Activated CD4-positive, alpha-beta T cell treated with anti-CD3 and anti-CD28 coated beads for 36 hours (primary cell): ENCODE measurements at regions of chr21 and their contacts with region 1.

Region 1: GRCh38 chr21:33199516-33200217 is 30.1 kb upstream of the IFNAR2 start:
- DNase-seq: peak; percentile 88
- ATAC-seq: peak; percentile 87
- H3K4me3 Mint-ChIP-seq: no peak overlapping the region
- H3K27ac Mint-ChIP-seq: no peak overlapping the region
- H3K4me1 Mint-ChIP-seq: peaks cover 29% of the 10 kb centered on the region
- H3K27me3 Mint-ChIP-seq: no peaks in the 10 kb centered on the region

Region 2: DNA sequence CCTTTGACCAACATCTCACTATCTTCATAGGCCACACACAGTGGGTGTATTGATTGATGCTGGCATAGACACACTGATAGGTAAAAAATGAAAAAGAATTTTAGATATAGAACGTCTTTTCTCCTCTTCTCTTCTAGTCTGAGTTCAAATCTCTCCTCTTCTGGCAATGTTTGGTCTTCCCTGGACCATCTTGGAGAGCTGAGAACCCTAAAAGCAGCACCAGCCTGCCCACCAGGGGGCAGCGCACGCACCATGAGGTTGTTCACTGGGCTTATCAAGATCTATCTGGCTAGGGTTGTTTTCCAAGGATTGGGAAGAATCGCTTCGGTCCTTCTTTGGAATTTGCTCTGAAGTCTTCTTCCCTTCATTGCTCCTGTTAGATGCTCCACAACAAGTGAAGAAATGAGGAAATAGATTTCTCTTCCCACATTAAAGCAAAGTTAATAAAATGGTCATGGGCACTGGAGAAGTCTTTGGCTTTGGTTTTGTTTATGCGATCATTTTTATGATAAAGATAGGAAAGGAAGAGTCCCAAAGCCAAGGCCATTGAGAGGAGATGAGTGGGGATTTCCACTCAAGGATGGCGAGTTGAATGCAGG is 277.9 kb before region 1 on chr21:
- CTCF ChIA-PET with region 1: interaction called, 3 read pairs
- POLR2A ChIA-PET with region 1: no interaction called
- intact Hi-C with region 1: loop called in 1 of 2 experiments (anchors 5 kb)
- DNase-seq: peak; percentile 72
- ATAC-seq: peak; percentile 51
- H3K4me3 Mint-ChIP-seq: no peak overlapping the region
- H3K27ac Mint-ChIP-seq: no peak overlapping the region
- H3K4me1 Mint-ChIP-seq: no peaks in the 10 kb centered on the region
- H3K27me3 Mint-ChIP-seq: no peaks in the 10 kb centered on the region

Region 3: GRCh38 chr21:33127154-33127893 is 72.3 kb before region 1 on chr21:
- CTCF ChIA-PET with region 1: interaction called, 9 read pairs
- POLR2A ChIA-PET with region 1: no interaction called
- intact Hi-C with region 1: loop called (anchors 2 kb)
- DNase-seq: peak; percentile 83
- ATAC-seq: peak; percentile 90
- H3K4me3 Mint-ChIP-seq: peak overlapping the region; percentile 52
- H3K27ac Mint-ChIP-seq: no peak overlapping the region
- H3K4me1 Mint-ChIP-seq: peaks cover 7% of the 10 kb centered on the region
- H3K27me3 Mint-ChIP-seq: peaks cover 8% of the 10 kb centered on the region

Region 4: GRCh38 chr21:33299181-33299752 is 99.6 kb after region 1 on chr21:
- CTCF ChIA-PET with region 1: interaction called, 15 read pairs
- POLR2A ChIA-PET with region 1: no interaction called
- intact Hi-C with region 1: no loop called
- DNase-seq: peak; percentile 69
- ATAC-seq: peak; percentile 90
- H3K4me3 Mint-ChIP-seq: peak overlapping the region; percentile 19
- H3K27ac Mint-ChIP-seq: peak overlapping the region; percentile 85
- H3K4me1 Mint-ChIP-seq: peaks cover 44% of the 10 kb centered on the region
- H3K27me3 Mint-ChIP-seq: no peaks in the 10 kb centered on the region

Region 5: DNA sequence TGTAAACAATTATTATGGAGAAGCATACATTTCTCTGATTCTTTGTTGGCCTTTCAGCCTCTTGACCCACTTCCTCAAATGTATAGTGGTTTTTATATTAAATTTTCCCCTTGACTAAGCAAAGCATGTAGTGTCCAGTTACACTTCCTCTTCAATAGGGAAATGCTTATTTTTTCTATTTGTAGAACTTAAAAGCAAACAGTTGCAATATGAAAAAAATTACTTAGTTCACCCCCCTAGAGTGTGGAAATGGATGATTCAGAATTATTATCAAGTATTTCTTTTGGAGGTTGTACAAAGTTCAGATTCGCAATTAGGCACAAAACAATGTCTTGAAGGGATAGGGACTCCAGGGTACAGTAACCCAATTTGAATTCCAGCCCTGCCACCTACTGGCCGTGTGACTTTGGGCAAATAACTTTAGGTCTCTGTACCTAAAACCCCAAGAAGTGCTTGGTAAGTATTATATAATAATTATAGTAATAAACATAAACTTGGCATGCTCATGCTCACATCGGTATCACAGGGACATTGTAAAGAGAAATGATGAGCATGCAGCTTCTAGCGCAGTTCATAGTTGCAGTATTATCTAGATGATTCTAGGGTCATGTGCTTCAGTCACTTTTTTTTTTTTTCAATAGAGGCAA is 174.9 kb after region 1 on chr21:
- CTCF ChIA-PET with region 1: interaction called, 12 read pairs
- POLR2A ChIA-PET with region 1: no interaction called
- intact Hi-C with region 1: loop called (anchors 1 kb)
- DNase-seq: peak; percentile 75
- ATAC-seq: peak; percentile 83
- H3K4me3 Mint-ChIP-seq: no peak overlapping the region
- H3K27ac Mint-ChIP-seq: no peak overlapping the region
- H3K4me1 Mint-ChIP-seq: peaks cover 13% of the 10 kb centered on the region
- H3K27me3 Mint-ChIP-seq: peaks cover 2% of the 10 kb centered on the region

Region 6: GRCh38 chr21:33608559-33608958 is 408.9 kb after region 1 on chr21:
- CTCF ChIA-PET with region 1: interaction called, 4 read pairs
- POLR2A ChIA-PET with region 1: no interaction called
- intact Hi-C with region 1: loop called in 1 of 2 experiments (anchors 1 kb)
- DNase-seq: no peak
- ATAC-seq: no peak
- H3K4me3 Mint-ChIP-seq: no peak overlapping the region
- H3K27ac Mint-ChIP-seq: no peak overlapping the region
- H3K4me1 Mint-ChIP-seq: peaks cover 4% of the 10 kb centered on the region
- H3K27me3 Mint-ChIP-seq: no peaks in the 10 kb centered on the region